Stomach (tissue), 19 donors: ENCODE measurements at regions of chr14 and their contacts with region 1.

Region 1: GRCh38 chr14:24108336-24108874 is 6.2 kb upstream of the DCAF11 start:
- DNase-seq: no peak
- H3K4me3 ChIP-seq: no peak overlapping the region
- H3K27ac ChIP-seq: peak overlapping the region in 4 of 5 donors; percentile 13 to 68 (median 48)
- H3K4me1 ChIP-seq: peaks cover 8 to 21% (median 16%) of the 10 kb centered on the region in 4 donors
- H3K27me3 ChIP-seq: no peaks in the 10 kb centered on the region
- CTCF ChIP-seq: no peak
- EP300 ChIP-seq: no peak
- POLR2A ChIP-seq: no peak

Region 2: GRCh38 chr14:24013654-24014514 is 94.5 kb before region 1 on chr14:
- intact Hi-C with region 1: no loop called
- DNase-seq: peak; percentile 44 to 88
- H3K4me3 ChIP-seq: no peak overlapping the region
- H3K27ac ChIP-seq: no peak overlapping the region
- H3K4me1 ChIP-seq: peaks cover 0 to 31% (median 19%) of the 10 kb centered on the region in 4 donors
- H3K27me3 ChIP-seq: no peaks in the 10 kb centered on the region
- CTCF ChIP-seq: peak in 6 of 7 experiments; percentile 42 to 94 (median 92)
- EP300 ChIP-seq: no peak
- POLR2A ChIP-seq: no peak

Region 3: DNA sequence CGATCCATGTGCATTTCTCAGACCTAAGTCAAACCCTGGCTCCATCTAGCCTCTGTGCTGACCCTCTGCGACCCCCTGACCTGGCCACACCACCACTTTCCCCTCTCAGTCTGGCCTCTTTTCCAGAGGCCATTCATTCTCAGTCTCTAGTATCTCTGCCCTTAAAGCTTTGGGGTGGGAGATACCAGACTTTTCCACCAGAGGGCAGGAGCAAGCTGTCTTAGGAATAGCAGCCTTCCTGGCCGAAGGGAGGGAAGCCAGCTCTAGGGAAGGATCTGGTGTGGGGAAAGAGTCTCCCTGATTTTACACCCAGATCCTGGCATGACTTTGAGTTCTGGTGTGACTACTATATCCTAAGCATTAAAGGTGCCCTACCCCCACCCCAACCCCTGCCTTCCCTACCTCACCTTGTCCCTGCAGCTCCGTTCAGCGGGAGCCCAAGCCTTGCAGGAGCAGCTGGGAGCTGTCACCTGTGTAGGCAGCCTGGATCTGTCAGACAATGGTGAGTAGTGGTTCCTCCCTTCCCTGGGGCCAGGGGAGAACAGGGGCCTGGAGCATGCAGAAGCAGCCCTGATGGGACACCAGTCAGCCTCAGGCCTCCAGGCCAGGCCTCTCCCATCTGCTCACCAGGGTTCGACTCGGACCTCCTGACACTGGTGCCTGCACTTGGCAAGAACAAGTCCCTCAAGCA is 50.0 kb before region 1 on chr14:
- intact Hi-C with region 1: loop called (anchors 10 kb)
- DNase-seq: peak; percentile 81 to 93
- H3K4me3 ChIP-seq: no peak overlapping the region
- H3K27ac ChIP-seq: no peak overlapping the region
- H3K4me1 ChIP-seq: peaks cover 0 to 7% (median 0%) of the 10 kb centered on the region in 4 donors
- H3K27me3 ChIP-seq: peaks cover 0 to 42% (median 6%) of the 10 kb centered on the region in 3 donors
- CTCF ChIP-seq: peak in 6 of 7 experiments; percentile 35 to 98 (median 88)
- EP300 ChIP-seq: no peak
- POLR2A ChIP-seq: no peak